AG04449 (cell line): ENCODE measurements at regions of chr22 and their contacts with region 1.

Region 1: GRCh38 chr22:37862570-37863325 is 13.5 kb downstream of the EIF3L start:
- DNase-seq: no peak
- H3K4me3 ChIP-seq: no peak overlapping the region
- CTCF ChIP-seq: no peak

Region 2: DNA sequence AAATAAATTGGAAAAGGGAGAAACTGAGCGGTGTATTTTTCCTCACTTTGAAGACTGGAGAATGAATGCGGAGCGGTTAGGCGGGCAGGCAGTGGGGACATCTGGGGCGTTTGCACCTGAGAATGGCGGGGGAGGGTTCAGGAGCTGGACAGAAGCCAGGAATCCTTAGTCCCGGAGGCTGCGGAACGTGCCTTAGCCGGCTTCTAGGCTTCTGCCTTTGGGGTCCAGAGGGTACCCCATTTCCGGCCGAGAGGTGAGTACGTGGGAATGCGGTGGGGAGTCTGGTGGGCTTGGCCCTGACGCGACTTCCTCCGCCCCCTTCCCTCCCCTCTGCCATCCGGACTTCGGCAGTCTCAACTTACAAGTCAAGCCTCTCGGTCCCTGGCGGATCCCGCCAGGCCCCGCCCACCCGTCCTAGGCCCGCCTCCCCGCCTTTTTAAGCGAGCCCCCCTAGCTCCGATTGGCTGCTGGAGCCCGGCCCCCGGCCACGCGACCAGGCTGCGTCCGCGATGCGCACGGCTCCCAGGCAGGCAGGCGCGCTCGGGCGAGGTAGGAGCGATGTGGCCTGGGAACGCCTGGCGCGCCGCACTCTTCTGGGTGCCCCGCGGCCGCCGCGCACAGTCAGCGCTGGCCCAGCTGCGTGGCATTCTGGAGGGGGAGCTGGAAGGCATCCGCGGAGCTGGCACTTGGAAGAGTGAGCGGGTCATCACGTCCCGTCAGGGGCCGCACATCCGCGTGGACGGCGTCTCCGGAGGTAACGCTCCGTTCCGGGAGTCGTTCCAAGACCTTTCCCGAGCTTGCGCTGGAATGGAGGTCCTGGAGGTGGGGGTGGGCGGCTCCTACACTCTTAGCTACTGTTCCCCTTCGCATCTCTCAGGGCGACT is 55.1 kb before region 1 on chr22 and contains the start of gene GCAT:
- CTCF ChIA-PET with region 1: interaction called, 223 read pairs
- POLR2A ChIA-PET with region 1: no interaction called
- DNase-seq: peak; percentile 80
- H3K4me3 ChIP-seq: peak within 1 kb of the TSS; percentile 88
- CTCF ChIP-seq: no peak

Region 3: DNA sequence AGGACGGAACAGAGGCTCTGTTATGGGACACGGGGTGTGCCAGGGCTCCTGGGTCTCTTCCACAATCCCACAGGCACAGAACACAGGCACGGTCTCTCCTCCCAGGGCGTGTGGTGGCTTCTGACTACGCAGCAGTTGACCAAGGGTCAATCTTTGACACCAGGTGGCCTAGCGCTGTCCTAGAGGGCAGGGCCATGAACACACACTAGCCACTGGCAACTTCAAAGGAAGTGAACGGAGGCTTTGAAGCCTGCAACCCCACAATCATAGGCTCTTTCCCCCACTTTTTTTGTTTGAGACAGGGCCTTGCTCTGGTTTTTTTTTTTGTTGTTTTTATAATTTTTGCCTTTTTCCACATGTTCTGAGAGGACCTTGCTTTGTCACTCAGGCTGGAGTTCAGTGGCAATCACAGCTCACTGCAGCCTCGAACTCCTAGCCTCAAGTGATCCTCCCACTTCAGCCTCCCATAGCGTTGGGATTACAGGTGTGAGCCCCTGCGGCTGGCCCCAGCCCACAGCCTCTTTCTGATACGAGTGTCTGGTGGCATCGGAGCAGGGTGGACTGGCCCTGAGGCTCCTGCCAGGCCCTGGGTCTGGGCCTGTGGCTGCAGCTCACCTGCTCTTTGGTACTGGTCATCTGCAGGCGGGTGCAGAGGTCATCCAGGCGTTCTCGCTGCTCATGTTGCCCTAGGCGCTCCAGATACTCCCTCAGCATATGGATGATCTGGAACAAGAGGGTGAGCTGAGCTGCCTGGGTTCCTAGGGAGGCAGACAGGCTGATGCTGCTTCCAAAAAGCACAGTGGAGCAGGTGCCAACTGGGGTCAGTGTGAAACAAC is 30.5 kb before region 1 on chr22:
- CTCF ChIA-PET with region 1: interaction called, 13 read pairs
- POLR2A ChIA-PET with region 1: no interaction called
- DNase-seq: no peak
- H3K4me3 ChIP-seq: no peak overlapping the region
- CTCF ChIP-seq: no peak

Region 4: DNA sequence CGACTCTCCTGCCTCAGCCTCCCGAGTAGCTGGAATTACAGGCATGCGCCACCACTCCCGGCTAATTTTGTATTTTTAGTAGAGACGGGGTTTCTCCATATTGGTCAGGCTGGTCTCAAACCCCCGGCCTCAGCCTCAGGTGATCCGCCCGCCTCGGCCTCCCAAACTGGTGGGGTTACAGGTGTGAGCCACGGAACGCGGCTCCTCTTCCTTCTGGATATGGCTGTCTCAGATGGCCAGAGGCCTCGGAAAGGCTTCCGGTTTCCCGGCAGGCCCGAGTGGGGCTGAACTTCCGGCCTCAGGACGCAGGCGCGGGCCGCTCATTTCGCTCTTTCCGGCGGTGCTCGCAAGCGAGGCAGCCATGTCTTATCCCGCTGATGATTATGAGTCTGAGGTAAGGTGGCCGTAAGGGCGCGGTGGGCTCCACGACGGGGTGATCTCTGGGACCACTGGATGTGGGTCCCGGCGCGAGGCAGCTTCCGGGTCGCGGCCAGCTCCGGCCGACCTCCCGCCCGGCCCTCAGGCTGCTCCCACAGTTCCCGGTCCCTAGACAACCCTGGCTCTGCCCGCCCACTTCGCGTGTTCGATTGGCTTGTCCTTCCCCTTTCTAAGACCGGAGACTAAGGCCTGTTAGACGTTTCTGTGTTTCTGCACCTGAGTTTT is 13.5 kb before region 1 on chr22 and contains the start of gene EIF3L:
- CTCF ChIA-PET with region 1: interaction called, 151 read pairs
- POLR2A ChIA-PET with region 1: interaction called, 6 read pairs
- DNase-seq: no peak
- H3K4me3 ChIP-seq: peak within 1 kb of the TSS; percentile 82
- CTCF ChIP-seq: no peak

Region 5: GRCh38 chr22:37887610-37888378 is 25.0 kb after region 1 on chr22:
- CTCF ChIA-PET with region 1: interaction called, 86 read pairs
- POLR2A ChIA-PET with region 1: no interaction called
- DNase-seq: peak; percentile 67
- H3K4me3 ChIP-seq: no peak overlapping the region
- CTCF ChIP-seq: peak; percentile 68

Region 6: DNA sequence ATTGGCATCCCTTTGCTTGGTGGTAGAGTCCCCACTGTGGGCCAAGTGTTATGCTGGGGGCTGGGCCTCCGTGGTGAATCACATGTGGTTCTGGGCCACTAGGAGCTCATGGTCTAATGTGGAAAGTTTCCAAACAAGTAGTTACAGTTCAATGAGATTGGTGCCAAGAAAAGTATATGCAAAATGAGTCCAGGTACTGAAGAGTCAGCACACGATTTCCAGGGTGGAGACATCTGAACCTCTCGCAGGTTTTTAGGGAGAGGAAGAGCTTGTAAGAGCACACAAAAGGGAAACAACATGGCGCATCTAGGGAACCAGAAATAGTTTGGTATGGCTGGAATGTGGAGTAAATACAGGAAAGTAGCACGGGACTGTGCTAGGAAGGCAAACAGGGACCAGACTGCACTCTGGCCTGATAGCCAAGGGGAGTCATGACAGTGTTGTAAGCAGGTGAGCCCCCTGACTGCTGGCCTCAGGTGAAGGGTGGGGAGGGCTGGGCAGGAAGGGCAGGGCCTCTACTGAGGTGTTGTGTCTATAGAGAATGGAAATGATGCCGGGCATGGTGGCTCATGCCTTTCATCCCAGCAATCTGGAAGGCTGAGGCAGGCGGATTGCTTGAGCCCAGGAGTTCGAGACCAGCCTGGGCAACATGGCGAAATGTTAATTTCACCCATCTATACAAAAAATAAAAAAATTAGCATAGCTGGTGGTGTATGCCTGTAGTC is 103.4 kb after region 1 on chr22:
- CTCF ChIA-PET with region 1: interaction called, 12 read pairs
- POLR2A ChIA-PET with region 1: no interaction called
- DNase-seq: no peak
- H3K4me3 ChIP-seq: no peak overlapping the region
- CTCF ChIP-seq: no peak

Region 7: GRCh38 chr22:37982938-37983859 is 120.5 kb after region 1 on chr22:
- CTCF ChIA-PET with region 1: no interaction called
- POLR2A ChIA-PET with region 1: no interaction called
- DNase-seq: no peak
- H3K4me3 ChIP-seq: no peak overlapping the region
- CTCF ChIP-seq: peak; percentile 3